HepG2 (cell line): ENCODE measurements at regions of chr13 and their contacts with region 1.

Region 1: GRCh38 chr13:97030705-97031452 is 36.6 kb upstream of the OXGR1 start:
- DNase-seq: peak; percentile 19
- ATAC-seq: peak; percentile 63; the same call in 2 of the 3 replicates
- H3K4me3 ChIP-seq: no peak overlapping the region
- H3K27ac ChIP-seq: no peak overlapping the region
- H3K4me1 ChIP-seq: no peaks in the 10 kb centered on the region
- H3K27me3 ChIP-seq: 0 out of 5 replicates have a peak, but pooled peaks cover 0 to 2% of the 10 kb centered on the region in 2 experiments
- CTCF ChIP-seq: peak; percentile 51
- EP300 ChIP-seq: no peak
- POLR2A ChIP-seq: no peak
- RAD21 ChIP-seq: no peak

Region 2: DNA sequence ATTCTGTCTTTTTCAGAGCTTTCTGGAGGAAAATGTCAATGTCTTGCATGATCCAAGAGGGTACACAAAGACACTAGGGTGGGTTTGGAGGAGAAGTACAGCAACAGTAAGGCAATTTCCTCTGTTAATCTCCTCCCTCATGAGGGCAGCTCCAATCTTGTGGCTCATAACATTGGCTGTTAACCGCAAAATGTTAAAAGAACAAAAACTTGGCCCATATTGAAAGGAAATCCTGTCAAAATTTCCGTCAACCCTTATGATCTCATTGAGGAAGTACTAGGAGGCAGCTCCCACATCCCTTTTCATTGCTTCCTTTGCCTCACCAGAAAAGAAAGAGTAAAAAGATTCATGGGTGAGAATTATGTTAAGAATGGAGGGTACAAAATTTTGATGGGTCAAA is 48.2 kb before region 1 on chr13:
- CTCF ChIA-PET with region 1: no interaction called
- POLR2A ChIA-PET with region 1: no interaction called
- in situ Hi-C with region 1: no loop called
- intact Hi-C with region 1: no loop called
- DNase-seq: no peak
- ATAC-seq: no peak
- H3K4me3 ChIP-seq: no peak overlapping the region
- H3K27ac ChIP-seq: no peak overlapping the region
- H3K4me1 ChIP-seq: no peaks in the 10 kb centered on the region
- H3K27me3 ChIP-seq: peaks cover 0 to 12% of the 10 kb centered on the region in 2 experiments; a peak in 2 of 5 replicates
- CTCF ChIP-seq: no peak
- EP300 ChIP-seq: no peak
- POLR2A ChIP-seq: no peak
- RAD21 ChIP-seq: no peak

Region 3: GRCh38 chr13:97004096-97004876 is 26.6 kb before region 1 on chr13:
- CTCF ChIA-PET with region 1: no interaction called
- POLR2A ChIA-PET with region 1: no interaction called
- in situ Hi-C with region 1: no loop called
- intact Hi-C with region 1: no loop called
- DNase-seq: peak; percentile 4
- ATAC-seq: no peak
- H3K4me3 ChIP-seq: no peak overlapping the region
- H3K27ac ChIP-seq: no peak overlapping the region
- H3K4me1 ChIP-seq: no peaks in the 10 kb centered on the region
- H3K27me3 ChIP-seq: peaks cover 0 to 15% of the 10 kb centered on the region in 2 experiments; a peak in 2 of 5 replicates
- CTCF ChIP-seq: no peak
- EP300 ChIP-seq: no peak
- POLR2A ChIP-seq: no peak
- RAD21 ChIP-seq: no peak

Region 4: GRCh38 chr13:97018029-97018831 is 12.6 kb before region 1 on chr13:
- CTCF ChIA-PET with region 1: interaction called, 7 read pairs
- POLR2A ChIA-PET with region 1: no interaction called
- in situ Hi-C with region 1: no loop called
- intact Hi-C with region 1: loop called (anchors 1 kb)
- DNase-seq: peak; percentile 36
- ATAC-seq: peak; percentile 85
- H3K4me3 ChIP-seq: no peak overlapping the region
- H3K27ac ChIP-seq: no peak overlapping the region
- H3K4me1 ChIP-seq: no peaks in the 10 kb centered on the region
- H3K27me3 ChIP-seq: peaks cover 1 to 8% of the 10 kb centered on the region in 2 experiments; a peak in 1 of 5 replicates
- CTCF ChIP-seq: peak; percentile 81
- EP300 ChIP-seq: no peak
- POLR2A ChIP-seq: no peak
- RAD21 ChIP-seq: no peak

Region 5: DNA sequence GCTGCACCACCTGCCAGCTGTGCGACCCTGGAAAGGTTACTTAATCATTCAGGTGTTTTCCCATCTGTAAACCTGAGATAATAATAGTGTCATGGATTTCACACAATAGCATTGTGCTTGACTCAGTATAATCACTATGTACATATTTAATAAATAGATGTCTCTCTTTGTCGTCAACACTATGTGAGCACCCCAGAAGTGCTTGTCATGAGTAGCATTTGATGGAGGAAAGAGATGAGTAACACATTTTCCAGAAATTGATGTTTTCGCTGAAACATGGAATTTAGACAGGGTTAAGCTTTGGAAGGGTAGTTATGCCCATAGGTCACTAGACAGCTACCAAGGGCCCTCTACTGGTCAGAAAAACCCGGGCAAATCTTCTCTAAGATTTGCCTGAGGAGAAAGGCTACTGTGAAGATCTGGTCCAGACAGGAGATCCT is 181.7 kb after region 1 on chr13:
- CTCF ChIA-PET with region 1: no interaction called
- POLR2A ChIA-PET with region 1: no interaction called
- in situ Hi-C with region 1: no loop called
- intact Hi-C with region 1: loop called (anchors 5 kb)
- DNase-seq: no peak
- ATAC-seq: peak; percentile 89
- H3K4me3 ChIP-seq: no peak overlapping the region
- H3K27ac ChIP-seq: no peak overlapping the region
- H3K4me1 ChIP-seq: peaks cover 23% of the 10 kb centered on the region
- H3K27me3 ChIP-seq: no peaks in the 10 kb centered on the region
- CTCF ChIP-seq: peak; percentile 60
- EP300 ChIP-seq: no peak
- POLR2A ChIP-seq: no peak
- RAD21 ChIP-seq: peak; percentile 33; the same call in 1 of the 2 replicates

Region 6: GRCh38 chr13:97359181-97360057 is 328.5 kb after region 1 on chr13:
- CTCF ChIA-PET with region 1: no interaction called
- POLR2A ChIA-PET with region 1: no interaction called
- in situ Hi-C with region 1: no loop called
- intact Hi-C with region 1: loop called (anchors 1 kb)
- DNase-seq: peak; percentile 73
- ATAC-seq: peak; percentile 91
- H3K4me3 ChIP-seq: no peak overlapping the region
- H3K27ac ChIP-seq: no peak overlapping the region
- H3K4me1 ChIP-seq: peaks cover 15% of the 10 kb centered on the region
- H3K27me3 ChIP-seq: no peaks in the 10 kb centered on the region
- CTCF ChIP-seq: peak; percentile 84
- EP300 ChIP-seq: no peak
- POLR2A ChIP-seq: no peak
- RAD21 ChIP-seq: peak; percentile 65